Esophagus squamous epithelium (tissue), 5 donors: ENCODE measurements at regions of chr5 and their contacts with region 1.

Region 1: DNA sequence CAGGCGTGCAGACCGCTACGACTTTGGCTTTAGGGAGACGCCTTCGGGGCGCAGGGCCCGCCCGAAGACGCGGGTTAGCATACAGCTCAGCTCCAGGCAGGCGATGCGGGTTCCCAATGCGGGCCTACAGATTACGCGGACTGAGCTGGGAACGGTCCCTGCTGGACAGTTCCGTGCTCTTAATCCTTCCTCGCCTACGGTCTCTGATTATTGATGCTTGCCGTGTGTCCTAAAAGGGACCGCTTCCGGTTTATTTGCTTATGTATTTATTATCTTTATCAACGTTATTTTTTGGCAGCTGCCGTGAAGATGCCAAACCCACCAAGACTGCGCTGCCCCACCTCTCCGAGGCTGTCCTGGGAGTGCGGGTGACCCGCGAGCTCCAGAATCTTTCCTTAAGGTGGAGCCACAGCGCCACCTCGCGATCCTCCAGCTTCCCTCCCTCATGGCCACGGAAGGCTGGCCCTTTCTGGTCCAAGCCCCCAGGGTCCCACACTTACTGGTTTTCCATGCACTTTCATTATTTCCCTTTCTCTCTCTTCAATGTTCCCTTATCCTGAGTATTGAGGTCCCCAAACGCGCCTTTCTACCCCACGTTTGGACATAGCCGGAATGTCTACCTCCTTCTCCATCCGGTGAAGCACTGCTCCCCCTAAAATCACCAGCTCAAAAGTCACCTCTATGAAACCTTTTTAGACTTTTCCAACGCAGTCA is 7.0 kb upstream of the EBF1 start:
- DNase-seq: no peak
- H3K4me3 ChIP-seq: peak overlapping the region in 3 of 4 donors; percentile 24 to 57 (median 37)
- H3K27ac ChIP-seq: no peak overlapping the region
- H3K4me1 ChIP-seq: peaks cover 0 to 46% (median 6%) of the 10 kb centered on the region in 3 donors
- H3K27me3 ChIP-seq: peaks cover 0 to 86% (median 13%) of the 10 kb centered on the region in 4 donors
- CTCF ChIP-seq: peak; percentile 65 to 84 (median 80)
- POLR2A ChIP-seq: no peak

Region 2: GRCh38 chr5:158174918-158175851 is 931.5 kb before region 1 on chr5:
- intact Hi-C with region 1: loop called (anchors 10 kb)
- DNase-seq: no peak
- H3K4me3 ChIP-seq: no peak overlapping the region
- H3K27ac ChIP-seq: peak overlapping the region in 2 of 4 donors; percentile 31 to 36
- H3K4me1 ChIP-seq: peaks cover 0 to 15% (median 0%) of the 10 kb centered on the region in 3 donors
- H3K27me3 ChIP-seq: no peaks in the 10 kb centered on the region
- CTCF ChIP-seq: peak; percentile 54 to 69 (median 64)
- POLR2A ChIP-seq: no peak

Region 3: GRCh38 chr5:158695595-158696330 is 411.0 kb before region 1 on chr5:
- intact Hi-C with region 1: loop called (anchors 2 kb)
- DNase-seq: no peak
- H3K4me3 ChIP-seq: no peak overlapping the region
- H3K27ac ChIP-seq: peak overlapping the region in 2 of 4 donors; percentile 23 to 43
- H3K4me1 ChIP-seq: peaks cover 0 to 12% (median 3%) of the 10 kb centered on the region in 3 donors
- H3K27me3 ChIP-seq: peaks cover 0 to 20% (median 0%) of the 10 kb centered on the region in 4 donors
- CTCF ChIP-seq: peak; percentile 91 to 96 (median 92)
- POLR2A ChIP-seq: no peak

Region 4: GRCh38 chr5:159227452-159227851 is 120.7 kb after region 1 on chr5:
- intact Hi-C with region 1: no loop called
- DNase-seq: no peak
- H3K4me3 ChIP-seq: no peak overlapping the region
- H3K27ac ChIP-seq: peak overlapping the region; percentile 23 to 86 (median 72)
- H3K4me1 ChIP-seq: peaks cover 0 to 59% (median 12%) of the 10 kb centered on the region in 3 donors
- H3K27me3 ChIP-seq: no peaks in the 10 kb centered on the region
- CTCF ChIP-seq: no peak
- POLR2A ChIP-seq: no peak